ENCODE measurements at regions of chr5 and their contacts with region 1.

Region 1: DNA sequence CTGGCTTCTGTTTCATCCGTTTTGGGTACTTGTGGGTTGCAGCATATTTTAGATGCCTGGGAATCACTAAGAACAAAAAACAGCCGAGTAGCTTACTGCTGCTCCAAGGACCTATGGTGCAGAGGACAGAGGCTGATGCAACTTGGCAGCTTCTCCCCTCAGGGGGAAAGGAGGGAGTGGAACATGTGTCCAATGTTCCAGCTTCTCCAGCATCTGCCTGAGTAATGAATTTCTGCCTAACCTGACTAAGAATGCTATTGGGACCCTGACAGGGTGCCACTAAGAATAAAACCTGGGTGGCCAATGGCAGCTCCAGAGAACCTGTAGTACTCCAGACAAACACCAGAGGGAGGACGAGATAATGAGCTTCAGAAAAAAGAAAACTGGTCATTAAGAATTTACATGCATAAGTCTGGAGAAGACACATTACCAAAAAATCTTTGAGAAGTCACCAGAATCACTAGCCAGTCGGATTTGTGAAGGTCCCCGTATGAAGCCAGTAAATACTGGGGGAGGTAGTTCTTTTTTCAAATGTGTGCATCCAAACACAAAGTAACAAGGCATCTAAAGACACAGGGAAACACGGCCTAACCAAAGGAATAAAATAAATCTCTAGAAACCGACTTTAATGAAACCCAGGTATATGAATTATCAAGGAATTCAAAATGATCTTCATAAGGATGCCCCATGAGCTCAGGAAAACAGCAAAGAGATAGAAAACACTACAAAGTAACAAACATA is 293.5 kb downstream of the HINT1 start:
- DNase-seq: peak; percentile 30
- H3K4me3 ChIP-seq: no peak overlapping the region
- H3K27ac ChIP-seq: no peak overlapping the region
- H3K4me1 ChIP-seq: no peaks in the 10 kb centered on the region
- CTCF ChIP-seq: peak; percentile 75

Region 2: GRCh38 chr5:130724658-130725057 is 146.9 kb before region 1 on chr5:
- CTCF ChIA-PET with region 1: no interaction called
- POLR2A ChIA-PET with region 1: no interaction called
- intact Hi-C with region 1: no loop called
- DNase-seq: no peak
- H3K4me3 ChIP-seq: no peak overlapping the region
- H3K27ac ChIP-seq: no peak overlapping the region
- H3K4me1 ChIP-seq: no peaks in the 10 kb centered on the region
- CTCF ChIP-seq: no peak

Region 3: GRCh38 chr5:131109540-131110255 is 238.2 kb after region 1 on chr5:
- CTCF ChIA-PET with region 1: no interaction called
- POLR2A ChIA-PET with region 1: no interaction called
- intact Hi-C with region 1: loop called (anchors 5 kb)
- DNase-seq: peak; percentile 47
- H3K4me3 ChIP-seq: no peak overlapping the region
- H3K27ac ChIP-seq: no peak overlapping the region
- H3K4me1 ChIP-seq: no peaks in the 10 kb centered on the region
- CTCF ChIP-seq: peak; percentile 90

Region 4: DNA sequence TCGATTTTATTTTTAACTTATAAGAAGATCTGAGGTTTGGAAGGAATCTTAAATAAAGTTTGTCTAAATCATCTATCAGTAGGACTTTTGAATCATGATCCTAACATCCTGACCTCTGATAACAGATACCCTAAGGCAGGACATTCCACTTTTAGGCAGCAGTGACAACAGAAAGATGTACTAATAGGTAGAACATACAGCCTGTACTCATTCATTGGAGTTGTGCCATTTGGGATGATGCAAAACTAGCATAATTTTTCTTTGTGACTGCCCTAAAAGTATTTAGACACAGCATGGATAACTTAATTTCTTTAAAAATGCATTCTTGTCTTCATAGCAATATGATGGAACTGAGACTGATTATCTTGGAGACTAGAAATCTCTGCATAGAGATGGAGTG is 432.0 kb after region 1 on chr5:
- CTCF ChIA-PET with region 1: no interaction called
- POLR2A ChIA-PET with region 1: no interaction called
- intact Hi-C with region 1: no loop called
- DNase-seq: no peak
- H3K4me3 ChIP-seq: no peak overlapping the region
- H3K27ac ChIP-seq: no peak overlapping the region
- H3K4me1 ChIP-seq: no peaks in the 10 kb centered on the region
- CTCF ChIP-seq: no peak

Measured in OCI-LY7 (cell line).